Ascending aorta (tissue), 2 donors: ENCODE measurements at regions of chr14 and their contacts with region 1.

Region 1: GRCh38 chr14:50773632-50774541 is 57.1 kb downstream of the NIN start:
- DNase-seq: peak in 1 of 2 donors; percentile 74
- H3K4me3 ChIP-seq: no peak overlapping the region
- H3K27ac ChIP-seq: peak overlapping the region; percentile 76 to 77
- H3K4me1 ChIP-seq: peaks cover 9 to 30% of the 10 kb centered on the region in 2 donors
- H3K27me3 ChIP-seq: no peaks in the 10 kb centered on the region
- CTCF ChIP-seq: peak; percentile 53 to 83 (median 78)

Region 2: DNA sequence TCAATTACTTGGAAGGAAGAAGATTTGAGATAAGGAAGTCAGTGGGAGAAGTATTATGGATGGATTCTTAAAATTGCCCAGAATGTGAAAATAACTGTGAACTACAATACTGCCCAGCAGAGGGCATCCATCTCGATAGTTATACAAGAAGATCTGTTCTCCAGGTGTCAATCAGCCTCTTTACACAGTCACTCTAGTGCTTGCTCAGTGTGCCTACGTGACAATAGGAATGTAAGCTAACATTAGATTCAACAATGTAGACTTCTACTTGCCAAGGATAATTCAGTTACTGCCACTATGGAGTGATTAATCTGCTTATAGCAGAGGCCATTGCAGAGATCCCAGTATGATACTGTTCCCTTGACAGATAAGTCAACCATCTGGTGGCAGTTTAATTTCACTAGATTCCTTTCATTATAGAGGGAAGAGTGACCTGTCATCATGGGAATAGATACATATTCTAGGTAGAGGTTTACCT is 230.9 kb before region 1 on chr14:
- intact Hi-C with region 1: loop called (anchors 5 kb)
- DNase-seq: no peak
- H3K4me3 ChIP-seq: no peak overlapping the region
- H3K27ac ChIP-seq: no peak overlapping the region
- H3K4me1 ChIP-seq: no peaks in the 10 kb centered on the region
- H3K27me3 ChIP-seq: no peaks in the 10 kb centered on the region
- CTCF ChIP-seq: peak; percentile 41 to 61 (median 51)

Region 3: GRCh38 chr14:50741571-50741970 is 32.3 kb before region 1 on chr14:
- intact Hi-C with region 1: loop called (anchors 2 kb)
- DNase-seq: no peak
- H3K4me3 ChIP-seq: no peak overlapping the region
- H3K27ac ChIP-seq: peak overlapping the region in 1 of 2 donors; percentile 11
- H3K4me1 ChIP-seq: peaks cover 0 to 3% of the 10 kb centered on the region in 2 donors
- H3K27me3 ChIP-seq: no peaks in the 10 kb centered on the region
- CTCF ChIP-seq: no peak

Region 4: GRCh38 chr14:50860478-50861086 is 86.7 kb after region 1 on chr14:
- intact Hi-C with region 1: loop called (anchors 5 kb)
- DNase-seq: peak; percentile 51 to 92
- H3K4me3 ChIP-seq: peak overlapping the region; percentile 58 to 67
- H3K27ac ChIP-seq: peak overlapping the region; percentile 33 to 38
- H3K4me1 ChIP-seq: peaks cover 0 to 3% of the 10 kb centered on the region in 2 donors
- H3K27me3 ChIP-seq: no peaks in the 10 kb centered on the region
- CTCF ChIP-seq: peak; percentile 32 to 86 (median 73)